ENCODE measurements at regions of chr10 and their contacts with region 1.

Region 1: DNA sequence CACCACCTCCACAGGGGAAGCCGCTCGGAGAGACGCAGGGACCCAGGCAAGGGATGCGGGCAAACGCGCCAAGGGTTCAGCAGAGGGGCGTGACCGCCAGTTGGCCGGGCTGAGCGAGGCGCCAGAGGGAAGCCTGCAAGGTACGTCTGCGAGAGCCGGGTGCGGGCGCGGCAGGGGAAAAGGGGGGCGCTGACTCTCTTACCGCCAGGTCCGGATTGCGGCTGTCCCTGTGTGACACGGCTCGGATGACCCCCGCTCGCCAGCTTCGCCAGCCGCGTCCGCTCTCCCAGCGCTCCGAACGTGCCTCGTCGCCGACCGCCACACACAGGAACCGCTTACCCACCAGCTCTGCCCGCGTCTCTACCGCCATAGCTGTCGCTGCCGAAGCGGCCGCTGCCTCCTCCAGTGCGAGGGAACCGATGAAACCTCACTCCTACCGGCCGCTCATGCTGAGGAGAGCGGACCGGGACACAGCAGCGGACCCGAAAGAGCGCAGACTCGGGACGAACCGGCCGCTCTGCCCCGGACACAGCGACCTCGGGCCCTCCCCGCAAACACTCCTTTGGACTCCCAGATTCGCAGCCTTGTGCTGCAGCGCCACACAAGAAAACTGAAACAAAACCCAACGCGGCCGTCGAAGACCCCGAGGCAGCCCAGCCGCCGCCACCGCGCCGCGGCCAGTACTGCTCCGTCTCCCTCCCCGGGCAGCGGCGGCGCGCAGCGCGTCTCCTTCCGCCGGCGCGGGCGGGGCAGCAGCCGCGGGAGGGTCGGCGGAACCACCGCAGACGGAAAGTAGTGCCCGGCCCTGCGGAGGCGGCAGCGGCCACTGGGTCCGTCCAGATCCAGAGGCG is at the start of gene JMJD1C:
- DNase-seq: peak; percentile 74
- ATAC-seq: peak; percentile 74
- H3K4me3 Mint-ChIP-seq: peak within 1 kb of the TSS; percentile 97
- H3K27ac Mint-ChIP-seq: peak within 1 kb of the TSS; percentile 92
- H3K4me1 Mint-ChIP-seq: peaks cover 20% of the 10 kb centered on the region
- H3K27me3 Mint-ChIP-seq: no peaks in the 10 kb centered on the region
- CTCF ChIP-seq: no peak
- total RNA-seq, gene JMJD1C: 167 and 176 TPM in 2 replicates

Region 2: DNA sequence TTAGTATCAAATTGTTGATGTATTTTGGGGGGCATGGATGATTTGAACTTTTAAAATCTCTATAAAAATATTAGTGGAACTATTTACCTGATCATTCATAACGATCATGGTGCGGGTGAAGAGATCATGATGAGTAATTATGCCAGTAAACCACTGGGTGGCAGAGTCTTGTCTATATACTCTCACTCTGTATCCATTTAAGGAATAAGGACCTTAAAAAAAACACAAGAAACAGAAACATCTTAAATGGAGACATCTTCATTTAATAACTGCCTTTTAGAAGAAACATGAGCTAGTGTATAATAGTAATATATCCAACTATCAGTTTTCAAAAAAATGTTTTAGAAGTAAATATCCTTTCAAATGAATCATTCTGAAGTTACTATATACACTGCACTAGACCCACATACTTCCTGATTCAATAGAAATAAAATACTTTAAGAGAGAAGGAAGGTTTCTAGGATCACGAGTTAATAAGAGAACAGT is 248.4 kb before region 1 on chr10:
- CTCF ChIA-PET with region 1: interaction called, 7 read pairs
- POLR2A ChIA-PET with region 1: interaction called, 3 read pairs
- intact Hi-C with region 1: loop called (anchors 1 kb)
- DNase-seq: no peak
- ATAC-seq: peak; percentile 89
- H3K4me3 Mint-ChIP-seq: no peak overlapping the region
- H3K27ac Mint-ChIP-seq: peak overlapping the region; percentile 41
- H3K4me1 Mint-ChIP-seq: peaks cover 60% of the 10 kb centered on the region
- H3K27me3 Mint-ChIP-seq: no peaks in the 10 kb centered on the region
- CTCF ChIP-seq: no peak

Region 3: DNA sequence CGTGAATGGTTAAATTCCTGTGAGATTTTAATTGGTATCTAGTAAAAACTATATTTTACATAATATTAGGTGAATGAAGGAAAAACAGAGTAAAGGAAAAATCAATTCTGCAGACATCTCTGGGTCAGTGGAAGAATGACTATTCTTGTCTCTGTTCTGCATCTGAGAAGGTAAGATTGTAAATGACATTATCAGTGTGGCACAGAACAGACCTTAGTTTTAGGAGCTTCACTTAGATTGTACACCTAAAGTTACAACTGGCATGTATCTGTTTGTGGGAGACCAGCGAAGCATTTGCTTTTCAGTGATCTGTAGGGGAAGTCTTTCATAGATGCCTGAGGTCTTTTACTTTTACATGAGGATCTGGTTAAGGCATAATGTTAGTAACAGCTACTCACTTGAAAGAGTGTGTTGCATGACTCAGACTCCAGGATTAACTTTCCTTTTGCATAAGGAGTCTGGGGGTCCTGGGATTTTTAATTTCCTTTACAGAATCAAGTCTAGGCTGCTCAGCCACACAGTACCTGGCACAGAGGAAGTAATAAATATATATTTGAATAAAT is 56.0 kb before region 1 on chr10:
- CTCF ChIA-PET with region 1: no interaction called
- POLR2A ChIA-PET with region 1: no interaction called
- intact Hi-C with region 1: no loop called
- DNase-seq: no peak
- ATAC-seq: no peak
- H3K4me3 Mint-ChIP-seq: no peak overlapping the region
- H3K27ac Mint-ChIP-seq: no peak overlapping the region
- H3K4me1 Mint-ChIP-seq: peaks cover 19% of the 10 kb centered on the region
- H3K27me3 Mint-ChIP-seq: no peaks in the 10 kb centered on the region
- CTCF ChIP-seq: no peak

Region 4: DNA sequence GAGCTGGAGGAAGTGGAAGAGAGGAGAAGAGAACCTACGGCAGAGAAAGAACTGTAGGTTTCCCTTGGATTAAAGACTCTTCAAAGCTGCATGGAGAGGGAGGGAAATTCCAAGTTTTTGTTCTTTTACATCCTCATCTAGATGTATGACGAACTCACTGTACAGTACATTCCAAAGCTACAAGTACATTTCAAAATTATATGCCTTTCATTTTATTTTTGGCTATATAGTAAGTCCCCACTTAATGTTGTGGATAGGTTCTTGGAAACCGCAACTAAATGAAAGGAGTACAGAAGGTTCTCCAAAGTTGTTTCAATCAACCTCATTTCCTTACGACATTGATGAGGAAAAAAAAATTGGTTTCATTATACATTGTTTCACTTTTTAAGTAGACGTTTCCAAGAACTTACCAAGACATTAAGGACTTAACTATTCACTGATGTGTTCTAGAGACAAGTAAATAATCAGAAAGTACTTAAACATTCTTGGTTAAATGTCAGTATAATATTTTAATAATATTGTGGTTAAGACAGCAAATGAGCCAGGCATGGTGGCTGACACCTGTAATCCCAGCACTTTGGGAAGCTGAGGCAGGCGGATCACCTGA is 16.4 kb after region 1 on chr10:
- CTCF ChIA-PET with region 1: interaction called, 3 read pairs
- POLR2A ChIA-PET with region 1: interaction called, 3 read pairs
- intact Hi-C with region 1: loop called (anchors 2 kb)
- DNase-seq: no peak
- ATAC-seq: no peak
- H3K4me3 Mint-ChIP-seq: no peak overlapping the region
- H3K27ac Mint-ChIP-seq: no peak overlapping the region
- H3K4me1 Mint-ChIP-seq: peaks cover 11% of the 10 kb centered on the region
- H3K27me3 Mint-ChIP-seq: no peaks in the 10 kb centered on the region
- CTCF ChIP-seq: no peak

Region 5: GRCh38 chr10:63605197-63605967 is 139.9 kb after region 1 on chr10:
- CTCF ChIA-PET with region 1: no interaction called
- POLR2A ChIA-PET with region 1: no interaction called
- intact Hi-C with region 1: loop called (anchors 5 kb)
- DNase-seq: no peak
- ATAC-seq: no peak
- H3K4me3 Mint-ChIP-seq: no peak overlapping the region
- H3K27ac Mint-ChIP-seq: no peak overlapping the region
- H3K4me1 Mint-ChIP-seq: peaks cover 37% of the 10 kb centered on the region
- H3K27me3 Mint-ChIP-seq: no peaks in the 10 kb centered on the region
- CTCF ChIP-seq: no peak

Measured in activated B cell treated with CpG ODN at 0.5 μM for 24 hours (primary cell).